Activated CD8-positive, alpha-beta T cell treated with anti-CD3 and anti-CD28 coated beads for 36 hours (primary cell): ENCODE measurements at regions of chr1 and their contacts with region 1.

Region 1: DNA sequence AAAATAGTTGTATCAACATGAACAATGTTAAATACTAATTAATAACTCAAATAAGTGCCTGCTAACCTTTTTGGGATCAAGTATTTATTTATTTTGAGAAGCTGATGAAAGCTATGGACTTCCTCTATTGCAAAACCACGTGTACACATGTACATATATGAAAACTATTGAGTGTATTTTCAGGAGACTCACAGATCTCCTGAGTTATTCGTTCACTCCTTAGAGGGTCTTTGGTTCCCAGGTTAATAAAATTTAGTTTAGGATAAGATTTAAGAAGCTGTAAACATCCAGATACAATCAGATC is 130.5 kb downstream of the DISC1 start:
- DNase-seq: no peak
- ATAC-seq: peak; percentile 24
- H3K4me3 Mint-ChIP-seq: no peak overlapping the region
- H3K27ac Mint-ChIP-seq: no peak overlapping the region
- H3K4me1 Mint-ChIP-seq: no peaks in the 10 kb centered on the region
- H3K27me3 Mint-ChIP-seq: no peaks in the 10 kb centered on the region
- CTCF ChIP-seq: peak; percentile 66

Region 2: GRCh38 chr1:231512147-231512698 is 244.8 kb before region 1 on chr1:
- CTCF ChIA-PET with region 1: no interaction called
- POLR2A ChIA-PET with region 1: no interaction called
- intact Hi-C with region 1: no loop called
- DNase-seq: no peak
- ATAC-seq: no peak
- H3K4me3 Mint-ChIP-seq: no peak overlapping the region
- H3K27ac Mint-ChIP-seq: no peak overlapping the region
- H3K4me1 Mint-ChIP-seq: no peaks in the 10 kb centered on the region
- H3K27me3 Mint-ChIP-seq: peaks cover 7% of the 10 kb centered on the region
- CTCF ChIP-seq: no peak

Region 3: GRCh38 chr1:231734417-231734816 is 22.6 kb before region 1 on chr1:
- CTCF ChIA-PET with region 1: interaction called, 20 read pairs
- POLR2A ChIA-PET with region 1: no interaction called
- intact Hi-C with region 1: no loop called
- DNase-seq: no peak
- ATAC-seq: no peak
- H3K4me3 Mint-ChIP-seq: no peak overlapping the region
- H3K27ac Mint-ChIP-seq: no peak overlapping the region
- H3K4me1 Mint-ChIP-seq: no peaks in the 10 kb centered on the region
- H3K27me3 Mint-ChIP-seq: no peaks in the 10 kb centered on the region
- CTCF ChIP-seq: no peak

Region 4: DNA sequence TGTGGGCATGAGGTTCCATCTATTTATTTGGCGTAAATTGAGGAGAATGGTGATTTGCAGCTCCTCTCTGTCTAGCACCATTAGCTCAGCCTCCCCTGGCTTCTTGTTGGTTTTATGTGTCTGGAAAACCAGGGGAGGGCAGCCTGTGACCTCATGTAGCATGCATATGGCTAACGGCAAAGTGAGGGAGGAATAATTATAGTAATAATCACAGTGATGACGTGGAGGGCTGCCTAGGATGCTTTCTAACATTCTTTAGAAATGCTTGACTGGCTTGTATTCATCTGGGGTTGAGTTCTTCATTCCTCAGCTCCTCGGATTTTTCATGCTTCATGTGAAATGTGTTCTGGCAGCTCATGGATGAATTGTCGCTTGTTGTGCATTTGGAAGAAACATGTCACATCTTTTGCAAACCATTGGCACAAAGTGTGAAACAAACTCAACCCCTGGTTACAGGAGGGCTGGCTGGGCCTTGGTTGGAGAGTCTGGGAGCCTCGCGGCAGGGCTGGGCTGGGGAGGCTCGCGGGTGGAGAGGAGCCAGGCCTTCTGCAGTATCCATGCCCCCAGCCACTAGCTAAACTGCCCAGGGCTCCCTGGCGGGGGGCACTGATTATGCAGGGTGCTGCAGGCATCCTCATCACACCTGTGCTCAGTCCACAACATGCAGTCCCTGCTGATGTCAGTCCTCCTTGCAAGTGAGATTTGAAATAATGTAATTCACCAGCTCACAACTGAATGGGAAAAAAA is 19.1 kb after region 1 on chr1:
- CTCF ChIA-PET with region 1: interaction called, 38 read pairs
- POLR2A ChIA-PET with region 1: no interaction called
- intact Hi-C with region 1: no loop called
- DNase-seq: no peak
- ATAC-seq: no peak
- H3K4me3 Mint-ChIP-seq: no peak overlapping the region
- H3K27ac Mint-ChIP-seq: no peak overlapping the region
- H3K4me1 Mint-ChIP-seq: no peaks in the 10 kb centered on the region
- H3K27me3 Mint-ChIP-seq: no peaks in the 10 kb centered on the region
- CTCF ChIP-seq: no peak

Region 5: DNA sequence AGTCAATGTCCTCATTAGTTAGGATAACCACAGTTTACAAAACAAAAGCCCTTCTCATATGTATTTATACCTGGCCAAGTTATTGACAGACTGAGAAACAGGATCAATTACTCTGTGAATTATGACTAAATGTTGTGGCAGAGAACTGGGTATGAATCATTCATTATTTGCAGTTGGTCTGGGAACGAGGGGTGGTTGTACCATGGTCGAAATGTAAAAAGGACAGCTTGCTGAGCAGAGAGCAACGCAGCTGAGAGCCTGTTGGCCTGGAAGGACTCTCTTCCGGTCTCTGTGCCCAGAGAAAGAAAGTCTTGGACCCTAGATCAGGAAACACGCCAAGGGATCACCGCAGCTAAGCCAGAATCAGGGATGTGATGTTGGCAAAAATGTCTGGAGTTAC is 39.1 kb after region 1 on chr1:
- CTCF ChIA-PET with region 1: interaction called, 10 read pairs
- POLR2A ChIA-PET with region 1: no interaction called
- intact Hi-C with region 1: no loop called
- DNase-seq: no peak
- ATAC-seq: no peak
- H3K4me3 Mint-ChIP-seq: no peak overlapping the region
- H3K27ac Mint-ChIP-seq: no peak overlapping the region
- H3K4me1 Mint-ChIP-seq: no peaks in the 10 kb centered on the region
- H3K27me3 Mint-ChIP-seq: no peaks in the 10 kb centered on the region
- CTCF ChIP-seq: no peak